ENCODE measurements at regions of chr2 and their contacts with region 1.

Region 1: DNA sequence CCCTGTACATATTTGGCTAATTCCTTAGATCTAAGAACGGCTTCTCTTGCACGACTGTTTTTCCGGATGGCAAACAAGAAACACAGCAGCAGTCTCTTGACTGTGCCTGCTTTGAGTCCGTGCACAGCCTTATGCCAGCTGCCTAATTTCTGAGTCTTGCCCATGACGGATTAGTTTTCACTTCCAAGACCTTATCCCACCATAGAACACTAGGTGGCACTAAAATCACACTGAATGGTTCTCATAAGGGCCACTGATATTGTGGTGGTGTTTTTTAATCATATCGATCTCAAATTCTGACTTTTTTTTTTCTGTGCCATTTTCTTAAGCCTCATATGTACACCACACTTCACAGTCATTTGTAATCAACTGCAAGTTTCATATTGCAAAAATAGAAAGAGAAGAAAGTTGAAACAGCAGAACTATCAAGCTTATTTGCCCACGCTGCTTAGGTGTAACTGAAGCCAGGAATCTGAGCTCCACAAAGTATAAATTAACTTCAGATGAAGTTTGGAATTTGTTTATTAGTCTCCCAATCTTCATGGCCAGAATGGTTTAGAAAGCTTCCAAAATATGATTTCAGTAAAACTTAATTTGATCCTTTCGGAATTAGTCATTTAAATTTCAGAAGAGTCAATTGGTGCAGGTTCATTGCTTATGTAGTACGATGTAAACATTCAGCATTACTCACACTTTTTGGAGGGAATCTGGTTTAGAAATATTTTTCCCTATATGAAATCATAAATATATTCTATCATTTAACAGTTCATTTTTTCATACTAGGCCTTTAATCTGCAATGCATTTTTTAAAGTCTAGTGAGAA is 45.5 kb upstream of the SCN7A start:
- DNase-seq: peak; percentile 20
- CTCF ChIP-seq: peak; percentile 68

Region 2: GRCh38 chr2:167212014-167212648 is 672.6 kb after region 1 on chr2:
- in situ Hi-C with region 1: loop called (anchors 25 kb)
- DNase-seq: peak; percentile 31
- CTCF ChIP-seq: peak; percentile 67

Measured in GM13976 (cell line).